ENCODE measurements at regions of chr15 and their contacts with region 1.

Region 1: DNA sequence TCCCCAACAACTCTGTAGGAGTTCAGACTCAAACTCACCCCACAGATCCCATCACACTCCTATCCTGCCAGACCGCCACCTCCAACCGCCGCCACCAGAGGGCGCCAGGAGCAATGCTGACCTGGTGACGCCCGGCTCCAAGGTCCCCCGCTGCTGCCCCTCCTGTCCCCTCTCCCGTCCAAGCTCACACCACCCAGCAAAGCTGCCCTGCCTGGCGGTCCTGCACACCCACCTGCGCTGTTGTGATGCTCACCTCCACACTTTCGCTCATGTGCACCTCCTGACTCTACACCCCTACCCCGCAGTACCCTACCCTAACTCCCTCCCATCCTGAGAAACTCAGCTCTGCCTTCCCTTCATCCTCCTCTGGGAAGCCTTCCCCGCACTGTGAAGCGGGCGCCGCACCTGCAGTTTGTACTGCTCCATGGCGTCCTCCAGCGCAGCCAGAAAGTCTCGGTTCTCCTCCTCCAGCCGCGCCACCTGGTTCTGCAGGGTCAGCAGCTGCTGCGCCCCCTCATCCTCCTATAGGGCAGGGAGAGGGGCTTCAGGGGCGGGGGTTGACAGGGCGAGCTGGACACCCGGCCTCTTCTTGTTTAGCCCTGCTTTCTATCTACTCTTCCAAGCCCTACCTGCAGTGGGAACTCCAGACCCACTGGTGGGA is 7.9 kb downstream of the KIF7 start:
- DNase-seq: peak; percentile 73 to 94
- ATAC-seq: peak; percentile 87 to 96
- H3K4me3 ChIP-seq: no peak overlapping the region
- H3K27ac ChIP-seq: peak overlapping the region in 1 of 2 experiments; percentile 39; a peak in 1 of 6 replicates
- H3K4me1 ChIP-seq: no peaks in the 10 kb centered on the region
- CTCF ChIP-seq: peak; percentile 90
- EP300 ChIP-seq: no peak
- POLR2A ChIP-seq: no peak
- RAD21 ChIP-seq: peak; percentile 57

Region 2: GRCh38 chr15:89611317-89611716 is 36.0 kb before region 1 on chr15:
- CTCF ChIA-PET with region 1: interaction called, 27 read pairs
- POLR2A ChIA-PET with region 1: no interaction called
- DNase-seq: no peak
- ATAC-seq: no peak
- H3K4me3 ChIP-seq: no peak overlapping the region
- H3K27ac ChIP-seq: no peak overlapping the region
- H3K4me1 ChIP-seq: peaks cover 10% of the 10 kb centered on the region
- CTCF ChIP-seq: no peak
- EP300 ChIP-seq: no peak
- POLR2A ChIP-seq: no peak
- RAD21 ChIP-seq: no peak

Region 3: GRCh38 chr15:89630974-89631901 is 16.1 kb before region 1 on chr15:
- CTCF ChIA-PET with region 1: interaction called, 43 read pairs
- POLR2A ChIA-PET with region 1: no interaction called
- DNase-seq: no peak
- ATAC-seq: peak in 1 of 2 experiments; percentile 14; a peak in 3 of 6 replicates
- H3K4me3 ChIP-seq: no peak overlapping the region
- H3K27ac ChIP-seq: no peak overlapping the region
- H3K4me1 ChIP-seq: no peaks in the 10 kb centered on the region
- CTCF ChIP-seq: no peak
- EP300 ChIP-seq: no peak
- POLR2A ChIP-seq: no peak
- RAD21 ChIP-seq: no peak

Region 4: DNA sequence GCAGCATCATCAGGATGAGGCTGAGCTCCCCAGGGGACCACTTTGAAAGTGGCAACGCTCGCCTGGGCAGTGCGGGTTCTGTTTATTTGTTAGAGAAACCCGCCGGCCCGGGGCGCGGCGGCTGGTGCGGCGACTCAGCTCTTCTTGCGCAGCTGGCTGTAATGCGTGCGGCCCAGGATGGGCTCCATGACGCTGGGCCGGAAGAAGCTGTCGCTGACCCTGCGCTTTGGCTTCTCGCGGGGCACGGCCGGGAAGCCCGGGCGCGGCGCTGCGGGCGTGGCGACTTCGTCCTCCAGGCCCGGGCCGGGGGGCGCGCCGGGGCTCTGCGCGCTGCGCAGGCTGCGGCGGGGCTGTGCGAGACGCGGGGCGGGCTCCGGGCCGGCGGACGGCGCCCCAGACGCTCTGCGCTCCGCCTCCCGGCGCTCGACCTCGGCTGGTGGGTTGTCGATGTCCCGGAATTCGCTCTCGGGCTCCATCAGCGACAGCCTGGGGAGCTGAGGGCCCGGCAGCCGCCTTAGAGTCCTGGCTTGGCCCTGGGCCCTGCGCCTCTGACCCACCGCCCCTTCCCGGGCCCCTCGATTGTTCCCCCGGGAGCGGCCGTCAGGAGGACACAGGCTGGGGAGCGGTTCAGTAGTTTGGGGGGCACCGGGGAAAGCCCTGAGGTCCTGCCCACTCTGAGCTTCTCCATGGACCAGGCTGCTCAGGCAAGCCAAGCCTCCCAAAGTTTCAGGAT is 18.3 kb after region 1 on chr15:
- CTCF ChIA-PET with region 1: interaction called, 126 read pairs
- POLR2A ChIA-PET with region 1: interaction called, 3 read pairs
- DNase-seq: peak; percentile 50 to 71
- ATAC-seq: peak; percentile 66 to 80
- H3K4me3 ChIP-seq: peak overlapping the region; percentile 50
- H3K27ac ChIP-seq: peak overlapping the region; percentile 74 to 89
- H3K4me1 ChIP-seq: peaks cover 8% of the 10 kb centered on the region; the same call in 1 of the 3 replicates
- CTCF ChIP-seq: no peak
- EP300 ChIP-seq: no peak
- POLR2A ChIP-seq: peak; percentile 48
- RAD21 ChIP-seq: no peak

Region 5: DNA sequence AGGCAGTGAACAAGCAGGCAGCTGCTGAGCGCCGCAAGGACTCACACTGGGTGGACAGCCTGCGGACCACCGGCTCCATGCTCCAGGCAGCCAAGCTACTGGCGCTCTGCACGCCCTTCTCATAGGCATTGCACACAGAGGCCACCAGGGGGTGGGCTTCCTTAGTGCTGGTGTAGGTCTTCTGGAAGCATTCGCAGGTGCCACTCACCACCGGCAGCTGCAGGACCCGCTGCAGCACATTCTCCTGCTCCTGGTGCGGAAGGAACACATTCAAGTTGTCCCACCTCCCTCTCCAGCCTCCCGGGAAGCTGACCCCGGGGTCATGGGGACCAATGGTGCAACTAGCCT is 25.8 kb after region 1 on chr15:
- CTCF ChIA-PET with region 1: interaction called, 79 read pairs
- POLR2A ChIA-PET with region 1: no interaction called
- DNase-seq: peak; percentile 64 to 76
- ATAC-seq: peak; percentile 52 to 93; a peak in 3 of 6 replicates
- H3K4me3 ChIP-seq: no peak overlapping the region
- H3K27ac ChIP-seq: no peak overlapping the region
- H3K4me1 ChIP-seq: no peaks in the 10 kb centered on the region
- CTCF ChIP-seq: peak; percentile 50
- EP300 ChIP-seq: no peak
- POLR2A ChIP-seq: no peak
- RAD21 ChIP-seq: peak in 1 of 2 experiments; percentile 43; a peak in 2 of 5 replicates

Region 6: DNA sequence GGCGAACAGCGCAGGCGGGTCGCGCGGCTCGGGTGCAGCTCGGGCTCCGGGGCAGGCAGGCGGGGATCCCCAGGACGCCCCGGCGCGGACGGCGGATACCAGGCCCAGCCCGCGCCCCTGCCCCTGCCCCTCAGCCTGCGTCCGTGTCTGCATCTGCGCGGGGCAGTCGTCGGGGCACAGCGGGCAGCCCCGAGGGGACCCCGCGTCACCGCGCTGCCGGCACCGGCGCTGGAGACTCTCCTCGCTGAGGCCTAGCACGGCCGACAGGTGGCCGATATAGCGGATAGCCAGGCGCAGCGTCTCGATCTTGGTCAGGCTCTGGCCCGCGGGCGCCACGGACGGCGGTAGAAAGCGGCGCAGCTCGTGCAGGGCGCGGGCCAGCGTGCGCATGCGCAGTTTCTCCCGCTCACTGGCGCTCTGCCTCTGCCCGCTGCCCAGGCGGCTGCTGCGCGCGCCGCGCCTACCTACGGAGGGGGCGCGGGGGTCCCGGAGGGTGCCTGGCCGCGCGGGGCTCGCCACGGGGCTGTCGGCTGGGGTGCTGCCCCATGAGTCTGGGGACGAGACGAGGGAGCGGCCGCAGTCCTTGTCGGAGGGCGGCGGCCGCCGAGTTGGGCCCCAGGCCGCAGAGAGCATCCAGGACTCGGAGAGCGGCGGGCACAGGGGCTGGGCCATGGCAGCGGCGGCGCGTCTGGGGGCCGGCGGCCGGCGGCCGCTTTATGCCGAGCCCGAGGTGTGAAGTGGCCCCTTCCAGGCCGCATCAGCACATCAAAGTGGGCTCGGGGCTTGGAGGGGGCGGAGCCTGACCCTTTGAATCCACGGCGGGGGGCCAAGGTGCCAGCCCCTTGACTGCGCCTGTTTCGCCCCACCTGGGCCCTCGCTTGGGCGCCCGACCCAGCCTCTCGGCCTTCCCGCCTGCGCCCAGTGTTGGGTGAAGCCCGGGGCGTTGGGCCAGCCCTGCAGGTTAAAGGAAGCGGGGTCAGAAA is 103.5 kb after region 1 on chr15 and contains the start of gene MESP1:
- CTCF ChIA-PET with region 1: interaction called, 11 read pairs
- POLR2A ChIA-PET with region 1: no interaction called
- DNase-seq: peak; percentile 96
- ATAC-seq: peak; percentile 94 to 98
- H3K4me3 ChIP-seq: peak within 1 kb of the TSS; percentile 60
- H3K27ac ChIP-seq: peak within 1 kb of the TSS; percentile 81 to 91
- H3K4me1 ChIP-seq: peaks cover 23% of the 10 kb centered on the region
- CTCF ChIP-seq: peak; percentile 74
- EP300 ChIP-seq: no peak
- POLR2A ChIP-seq: peak; percentile 93
- RAD21 ChIP-seq: peak; percentile 51 to 64
- polyA plus RNA-seq, gene MESP1: 1.2 and 1.7 TPM in 2 replicates